Left cardiac atrium (tissue), 4 donors: ENCODE measurements at regions of chr4 and their contacts with region 1.

Region 1: GRCh38 chr4:118974758-118975157 is 86.1 kb downstream of the SYNPO2 start:
- DNase-seq: no peak
- ATAC-seq: peak in 1 of 2 donors; percentile 29

Region 2: GRCh38 chr4:118772081-118772766 is 202.5 kb before region 1 on chr4:
- intact Hi-C with region 1: loop called (anchors 2 to 5 kb)
- DNase-seq: no peak
- ATAC-seq: peak; percentile 80 to 82

Region 3: GRCh38 chr4:119059221-119059620 is 84.5 kb after region 1 on chr4:
- intact Hi-C with region 1: no loop called
- DNase-seq: no peak
- ATAC-seq: no peak